PC-9 (cell line): ENCODE measurements at regions of chr19 and their contacts with region 1.

Region 1: DNA sequence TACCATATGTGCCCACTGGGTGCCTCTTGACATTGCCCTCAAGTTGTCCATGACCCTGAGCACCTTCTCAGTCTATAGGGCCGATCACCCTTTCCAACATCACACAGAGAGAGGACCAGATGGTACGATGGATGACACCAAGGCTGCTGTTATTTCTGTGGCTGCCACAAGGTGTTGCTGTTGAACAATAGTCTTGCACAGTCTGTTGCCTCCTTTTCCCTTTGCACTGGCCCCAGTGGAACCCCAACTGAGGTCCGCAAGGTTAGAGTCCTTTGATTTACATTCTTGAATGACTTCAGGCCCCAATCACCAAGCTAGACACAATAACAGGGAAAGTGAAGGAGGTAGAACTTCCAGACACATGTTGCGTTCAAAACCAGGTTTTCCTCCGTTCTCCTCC is 52.0 kb downstream of the TINCR start:
- DNase-seq: no peak
- H3K4me3 ChIP-seq: no peak overlapping the region
- H3K27ac ChIP-seq: no peak overlapping the region
- H3K4me1 ChIP-seq: no peaks in the 10 kb centered on the region
- H3K27me3 ChIP-seq: no peaks in the 10 kb centered on the region
- CTCF ChIP-seq: no peak; the same call in 1 of the 2 replicates

Region 2: DNA sequence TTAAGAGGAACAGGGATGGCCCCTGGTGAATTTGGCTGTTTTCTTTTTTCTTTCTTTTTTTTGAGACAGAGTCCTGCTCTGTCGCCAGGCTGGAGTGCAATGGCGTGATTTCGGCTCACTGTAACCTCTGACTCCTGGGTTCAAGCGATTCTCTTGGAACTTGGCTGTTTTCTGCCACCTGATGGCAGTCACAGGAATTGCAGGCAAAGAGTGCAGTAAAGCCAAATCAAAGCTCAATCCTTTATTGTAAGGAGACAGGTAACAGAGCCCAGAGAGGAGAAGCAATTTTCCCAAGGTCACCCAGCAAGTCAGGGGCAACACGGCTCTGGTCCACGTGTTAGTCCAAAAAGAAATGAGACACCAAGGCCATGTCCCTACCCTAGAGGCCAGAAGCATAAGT is 45.8 kb after region 1 on chr19:
- CTCF ChIA-PET with region 1: no interaction called
- POLR2A ChIA-PET with region 1: no interaction called
- intact Hi-C with region 1: no loop called
- DNase-seq: no peak
- H3K4me3 ChIP-seq: no peak overlapping the region
- H3K27ac ChIP-seq: no peak overlapping the region
- H3K4me1 ChIP-seq: no peaks in the 10 kb centered on the region
- H3K27me3 ChIP-seq: no peaks in the 10 kb centered on the region
- CTCF ChIP-seq: peak; percentile 75

Region 3: DNA sequence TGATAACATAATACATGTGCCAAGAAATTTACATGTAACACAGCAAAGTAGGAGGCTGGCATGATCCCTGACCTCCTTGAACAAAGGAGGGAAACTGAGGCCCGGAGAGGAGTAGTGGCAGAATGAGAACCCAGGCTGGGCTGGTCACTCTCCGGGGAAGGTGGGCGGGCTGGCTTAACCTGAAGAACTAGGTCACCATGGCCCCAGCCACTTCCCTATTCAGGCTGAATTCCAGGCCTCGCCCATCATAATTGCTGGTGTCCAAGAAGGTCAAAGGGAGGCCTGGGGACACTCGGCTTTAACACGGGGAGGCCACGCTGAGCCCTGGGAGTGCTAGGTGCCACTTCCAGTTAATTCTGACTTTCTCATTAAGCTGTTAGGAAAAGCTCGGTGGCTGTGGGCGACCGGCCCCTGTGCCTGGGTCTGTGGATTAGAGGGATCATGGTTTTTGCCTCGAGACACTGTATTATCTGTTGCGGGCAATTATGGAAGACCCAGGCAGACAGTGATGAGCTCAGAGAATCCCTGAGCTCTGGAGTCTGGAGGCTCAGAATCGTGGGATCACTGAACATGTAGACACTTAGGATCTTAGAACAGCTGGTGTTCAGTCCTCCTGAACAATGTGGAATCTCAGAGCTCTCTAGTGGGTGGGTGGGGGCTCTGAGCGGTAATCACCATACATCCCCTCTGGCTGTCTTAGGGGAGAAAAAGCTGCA is 57.0 kb after region 1 on chr19:
- CTCF ChIA-PET with region 1: no interaction called
- POLR2A ChIA-PET with region 1: interaction called, 12 read pairs
- intact Hi-C with region 1: no loop called
- DNase-seq: peak; percentile 63 to 75
- H3K4me3 ChIP-seq: no peak overlapping the region
- H3K27ac ChIP-seq: peak overlapping the region; percentile 73
- H3K4me1 ChIP-seq: peaks cover 24% of the 10 kb centered on the region
- H3K27me3 ChIP-seq: no peaks in the 10 kb centered on the region
- CTCF ChIP-seq: no peak

Region 4: DNA sequence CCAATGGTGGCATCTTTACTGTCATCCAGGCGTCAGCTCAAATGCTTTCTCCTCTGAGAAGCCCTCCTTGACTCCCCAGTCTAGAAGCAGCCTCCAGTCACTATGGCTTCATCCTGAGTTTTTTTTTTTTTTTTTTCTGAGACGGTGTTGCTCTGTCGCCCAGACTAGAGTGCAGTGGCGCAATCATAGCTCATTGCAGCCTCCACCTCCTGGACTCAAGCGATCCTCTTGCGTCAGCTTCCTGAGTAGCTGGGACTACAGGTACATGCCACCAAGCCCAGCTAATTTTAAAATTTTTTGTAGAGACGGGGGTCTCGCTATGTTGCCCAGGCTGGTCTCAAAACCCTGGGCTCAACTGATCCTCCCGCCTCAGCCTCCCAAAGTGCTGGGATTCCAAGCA is 293.3 kb after region 1 on chr19:
- CTCF ChIA-PET with region 1: no interaction called
- POLR2A ChIA-PET with region 1: no interaction called
- intact Hi-C with region 1: no loop called
- DNase-seq: no peak
- H3K4me3 ChIP-seq: no peak overlapping the region
- H3K27ac ChIP-seq: peak overlapping the region; percentile 34; the same call in 1 of the 2 replicates
- H3K4me1 ChIP-seq: no peaks in the 10 kb centered on the region
- H3K27me3 ChIP-seq: 0 out of 2 replicates have a peak, but pooled peaks cover 8% of the 10 kb centered on the region
- CTCF ChIP-seq: no peak